CD8-positive, alpha-beta memory T cell (primary cell): ENCODE measurements at regions of chr7 and their contacts with region 1.

Region 1: DNA sequence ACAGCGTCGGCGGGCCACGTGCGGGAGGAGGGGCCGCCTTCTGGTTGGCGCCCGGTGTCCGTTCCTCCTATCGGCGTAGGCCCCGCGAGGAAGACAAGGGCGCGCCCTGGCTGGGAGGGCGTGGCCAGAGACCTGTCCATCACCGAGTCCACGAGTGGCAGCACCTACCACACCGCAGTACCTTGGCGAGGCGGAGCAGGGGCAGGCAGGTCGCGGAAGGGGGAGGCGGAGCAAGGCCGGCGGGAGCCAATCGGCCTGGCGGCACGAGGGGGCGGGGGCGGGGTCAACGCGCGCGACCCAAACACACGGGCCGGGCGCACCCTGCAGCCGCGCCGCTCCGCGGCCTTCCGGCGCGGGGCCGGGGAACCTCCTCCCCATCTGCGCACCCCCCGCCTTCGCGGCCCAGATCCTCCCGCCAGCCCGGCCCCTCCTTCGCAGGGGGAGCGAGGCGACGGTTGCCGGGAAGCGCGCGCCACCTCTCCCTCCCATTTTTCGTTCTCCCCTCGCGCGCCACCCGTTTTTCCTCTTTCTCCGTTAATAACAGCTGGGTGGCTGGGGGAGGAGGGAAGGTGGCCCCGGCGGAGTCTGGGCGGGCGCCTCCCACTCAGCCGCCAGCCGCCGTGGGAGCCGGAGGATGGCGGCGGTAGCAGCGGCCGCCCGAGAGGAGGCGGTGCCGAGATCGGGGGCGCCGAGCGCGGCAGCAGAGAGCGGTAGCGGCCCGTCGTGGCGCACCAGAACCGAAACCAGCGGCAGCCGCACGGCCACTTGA is at the start of gene ZNRF2:
- DNase-seq: peak; percentile 98 to 100 (median 98)
- H3K4me3 ChIP-seq: peak within 1 kb of the TSS; percentile 44
- H3K4me3 Mint-ChIP-seq: peak within 1 kb of the TSS; percentile 82 to 92 (median 88)
- H3K27ac ChIP-seq: peak within 1 kb of the TSS; percentile 80
- H3K27ac Mint-ChIP-seq: peak within 1 kb of the TSS; percentile 87 to 97 (median 95)
- H3K4me1 ChIP-seq: peaks cover 26% of the 10 kb centered on the region
- H3K4me1 Mint-ChIP-seq: peaks cover 43 to 56% (median 51%) of the 10 kb centered on the region in 3 donors
- H3K27me3 ChIP-seq: no peaks in the 10 kb centered on the region
- H3K27me3 Mint-ChIP-seq: no peaks in the 10 kb centered on the region
- total RNA-seq, gene ZNRF2: 12.4 to 13.6 TPM

Region 2: GRCh38 chr7:30268586-30268985 is 15.9 kb before region 1 on chr7:
- CTCF ChIA-PET with region 1: no interaction called
- POLR2A ChIA-PET with region 1: no interaction called
- DNase-seq: no peak
- H3K4me3 ChIP-seq: no peak overlapping the region
- H3K4me3 Mint-ChIP-seq: no peak overlapping the region
- H3K27ac ChIP-seq: no peak overlapping the region
- H3K27ac Mint-ChIP-seq: peak overlapping the region in 1 of 8 donors; percentile 68
- H3K4me1 ChIP-seq: no peaks in the 10 kb centered on the region
- H3K4me1 Mint-ChIP-seq: no peaks in the 10 kb centered on the region
- H3K27me3 ChIP-seq: no peaks in the 10 kb centered on the region
- H3K27me3 Mint-ChIP-seq: peaks cover 0 to 4% of the 10 kb centered on the region in 2 donors

Region 3: GRCh38 chr7:30322271-30323005 is 38.0 kb after region 1 on chr7:
- CTCF ChIA-PET with region 1: no interaction called
- POLR2A ChIA-PET with region 1: interaction called, 14 read pairs
- DNase-seq: peak in 2 of 5 donors; percentile 23 to 36
- H3K4me3 ChIP-seq: peak overlapping the region; percentile 23
- H3K4me3 Mint-ChIP-seq: peak overlapping the region; percentile 80 to 90 (median 88)
- H3K27ac ChIP-seq: peak overlapping the region; percentile 41
- H3K27ac Mint-ChIP-seq: peak overlapping the region; percentile 96 to 99 (median 98)
- H3K4me1 ChIP-seq: peaks cover 36% of the 10 kb centered on the region
- H3K4me1 Mint-ChIP-seq: peaks cover 74 to 93% (median 88%) of the 10 kb centered on the region in 3 donors
- H3K27me3 ChIP-seq: no peaks in the 10 kb centered on the region
- H3K27me3 Mint-ChIP-seq: no peaks in the 10 kb centered on the region